Calu3 (cell line): ENCODE measurements at regions of chr16 and their contacts with region 1.

Region 1: DNA sequence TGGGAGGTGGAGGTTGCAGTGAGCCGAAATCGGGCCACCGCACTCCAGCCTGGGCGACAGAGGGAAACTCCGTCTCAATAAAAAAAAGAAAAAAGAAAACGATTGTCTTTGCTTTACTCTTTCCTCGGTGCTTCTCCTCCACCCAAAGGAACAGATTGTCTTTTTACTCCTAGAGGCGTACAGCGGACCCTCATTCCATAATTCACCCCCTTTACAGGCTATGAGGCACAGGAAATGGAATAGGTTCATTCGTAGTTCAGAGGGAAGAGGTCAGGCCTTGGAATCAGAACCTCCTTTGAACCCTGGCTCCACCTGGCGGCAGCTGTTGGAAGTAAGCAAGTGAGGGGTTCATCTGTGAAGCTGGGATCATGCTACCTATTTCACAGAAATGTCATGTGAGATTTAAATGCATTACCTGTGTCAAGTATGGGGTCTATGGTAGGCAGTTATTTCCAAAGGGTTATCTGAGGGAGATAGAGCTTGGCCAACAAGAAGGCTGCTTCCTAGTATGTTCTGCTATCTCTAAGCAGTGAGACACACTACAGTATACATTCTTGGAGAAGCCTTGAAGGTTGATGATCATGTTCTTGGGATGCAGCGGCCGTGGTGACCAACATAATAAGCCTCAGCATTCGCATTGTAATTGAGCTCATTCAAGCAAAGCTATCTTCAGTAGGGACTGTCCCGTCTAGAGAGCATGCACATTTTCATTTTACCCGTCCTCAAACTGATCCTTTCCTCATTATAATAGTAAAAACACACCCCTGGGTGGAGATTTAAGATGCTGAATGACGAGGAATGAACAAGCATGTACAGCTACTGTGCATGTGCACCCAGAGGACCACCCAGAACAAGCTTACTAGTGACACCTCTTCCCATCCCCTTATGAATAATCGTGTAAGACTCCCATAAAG is 18.7 kb upstream of the ZNF689 start:
- DNase-seq: peak; percentile 93
- H3K4me3 Mint-ChIP-seq: no peak overlapping the region
- H3K27ac Mint-ChIP-seq: no peak overlapping the region
- H3K4me1 Mint-ChIP-seq: peaks cover 14% of the 10 kb centered on the region
- H3K27me3 Mint-ChIP-seq: peaks cover 6% of the 10 kb centered on the region
- CTCF ChIP-seq: peak; percentile 93

Region 2: GRCh38 chr16:30041846-30042267 is 587.0 kb before region 1 on chr16:
- CTCF ChIA-PET with region 1: no interaction called
- intact Hi-C with region 1: loop called (anchors 5 kb)
- DNase-seq: peak; percentile 44
- H3K4me3 Mint-ChIP-seq: no peak overlapping the region
- H3K27ac Mint-ChIP-seq: no peak overlapping the region
- H3K4me1 Mint-ChIP-seq: peaks cover 17% of the 10 kb centered on the region
- H3K27me3 Mint-ChIP-seq: peaks cover 13% of the 10 kb centered on the region
- CTCF ChIP-seq: peak; percentile 60